Breast epithelium (tissue), 4 donors: ENCODE measurements at regions of chr7 and their contacts with region 1.

Region 1: DNA sequence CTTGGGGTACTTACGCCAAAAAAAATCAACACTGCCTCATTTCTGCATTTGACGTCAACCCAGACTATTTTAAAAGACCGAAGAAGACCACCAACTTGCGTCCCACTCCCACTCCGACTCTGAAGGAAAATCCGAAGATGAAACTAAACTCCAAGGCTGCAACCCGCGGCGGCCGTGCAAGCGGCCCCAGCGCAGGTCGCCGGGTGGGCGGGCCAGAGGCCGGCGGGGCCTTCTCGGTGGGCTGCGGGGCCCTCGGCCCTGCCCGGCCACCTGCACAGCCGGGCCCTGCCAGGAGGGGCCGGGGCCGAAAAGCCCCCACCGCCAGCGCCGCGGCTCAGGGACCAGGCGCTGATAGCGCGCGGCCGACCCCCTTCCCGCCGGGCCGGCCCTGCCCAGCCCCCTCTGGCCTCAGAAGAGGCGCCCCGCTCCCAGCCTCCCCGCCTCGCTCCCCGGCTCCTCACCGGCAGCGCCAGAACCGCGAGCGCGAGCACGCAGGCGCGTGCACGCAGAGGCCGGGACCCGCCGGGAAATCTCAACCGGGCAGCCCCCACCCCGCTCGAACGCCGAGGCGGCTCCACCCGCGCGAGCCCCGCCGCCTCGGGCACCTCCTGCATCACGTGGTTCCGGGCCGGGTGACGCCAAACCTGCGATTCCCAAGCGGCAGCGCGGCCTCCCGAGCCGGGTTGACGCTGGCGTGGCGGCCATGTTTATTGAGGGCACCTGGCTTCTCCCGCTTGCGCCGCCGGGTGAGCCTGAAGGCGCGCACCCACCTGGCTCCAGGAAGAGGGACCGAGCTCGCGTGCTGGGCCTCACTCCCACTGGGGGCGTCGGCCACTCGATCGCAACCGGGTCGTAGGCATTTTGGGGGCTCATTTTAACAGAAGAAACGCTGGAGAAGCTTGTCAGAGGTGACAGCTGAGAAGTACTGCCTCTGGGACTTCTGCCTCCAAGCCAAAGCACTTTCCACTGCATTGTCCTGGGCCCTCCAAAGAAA is at the start of gene C7orf25:
- DNase-seq: peak; percentile 91 to 96
- H3K4me3 ChIP-seq: peak within 1 kb of the TSS; percentile 75 to 92 (median 76)
- H3K27ac ChIP-seq: peak within 1 kb of the TSS; percentile 68 to 78
- H3K4me1 ChIP-seq: peaks cover 0 to 8% of the 10 kb centered on the region in 2 donors
- H3K27me3 ChIP-seq: no peaks in the 10 kb centered on the region
- CTCF ChIP-seq: no peak
- POLR2A ChIP-seq: no peak
- total RNA-seq, gene C7orf25: 10.9 to 13.6 (median 11.8) TPM

Region 2: DNA sequence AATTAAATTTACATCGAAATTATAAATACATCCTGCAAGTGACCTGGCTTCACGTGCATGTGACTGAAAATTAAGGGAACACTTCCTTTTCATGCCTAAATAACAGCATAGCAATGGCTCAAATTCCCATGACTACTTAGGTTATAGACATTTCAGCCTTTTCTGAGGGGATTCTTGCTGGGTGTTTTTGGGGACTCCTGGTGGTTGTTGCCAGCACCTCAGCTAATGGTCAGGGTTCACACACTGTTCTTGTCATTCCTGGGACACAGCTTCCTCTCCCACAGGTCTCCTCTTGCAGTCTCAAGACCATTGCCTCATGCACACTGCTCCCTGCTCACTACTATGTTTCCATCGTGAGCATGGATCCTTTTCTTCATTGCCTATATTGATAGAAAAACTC is 525.8 kb before region 1 on chr7:
- intact Hi-C with region 1: no loop called
- DNase-seq: no peak
- H3K4me3 ChIP-seq: no peak overlapping the region
- H3K27ac ChIP-seq: no peak overlapping the region
- H3K4me1 ChIP-seq: no peaks in the 10 kb centered on the region
- H3K27me3 ChIP-seq: no peaks in the 10 kb centered on the region
- CTCF ChIP-seq: no peak
- POLR2A ChIP-seq: no peak

Region 3: DNA sequence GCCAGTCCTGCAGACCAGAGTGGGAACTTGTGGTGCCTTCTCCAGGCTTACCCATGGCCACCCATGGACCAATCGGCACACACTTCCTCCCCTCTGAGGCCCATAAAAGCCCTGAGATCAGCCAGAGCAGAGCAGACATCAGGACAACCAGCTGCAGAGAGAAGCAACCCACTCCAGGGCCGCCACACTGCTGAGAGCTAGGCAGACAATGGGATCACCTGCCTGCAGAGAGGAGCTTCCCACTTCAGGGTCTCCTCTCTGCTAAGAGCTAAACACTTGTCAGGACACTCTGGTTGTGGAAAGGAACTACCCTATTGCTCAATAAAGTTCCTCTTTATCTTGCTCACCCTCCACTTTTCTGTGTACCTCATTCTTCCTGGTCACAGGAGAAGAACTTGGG is 33.9 kb before region 1 on chr7:
- intact Hi-C with region 1: loop called (anchors 2 kb)
- DNase-seq: no peak
- H3K4me3 ChIP-seq: no peak overlapping the region
- H3K27ac ChIP-seq: no peak overlapping the region
- H3K4me1 ChIP-seq: no peaks in the 10 kb centered on the region
- H3K27me3 ChIP-seq: no peaks in the 10 kb centered on the region
- CTCF ChIP-seq: no peak
- POLR2A ChIP-seq: no peak